ENCODE measurements at regions of chr5 and their contacts with region 1.

Region 1: DNA sequence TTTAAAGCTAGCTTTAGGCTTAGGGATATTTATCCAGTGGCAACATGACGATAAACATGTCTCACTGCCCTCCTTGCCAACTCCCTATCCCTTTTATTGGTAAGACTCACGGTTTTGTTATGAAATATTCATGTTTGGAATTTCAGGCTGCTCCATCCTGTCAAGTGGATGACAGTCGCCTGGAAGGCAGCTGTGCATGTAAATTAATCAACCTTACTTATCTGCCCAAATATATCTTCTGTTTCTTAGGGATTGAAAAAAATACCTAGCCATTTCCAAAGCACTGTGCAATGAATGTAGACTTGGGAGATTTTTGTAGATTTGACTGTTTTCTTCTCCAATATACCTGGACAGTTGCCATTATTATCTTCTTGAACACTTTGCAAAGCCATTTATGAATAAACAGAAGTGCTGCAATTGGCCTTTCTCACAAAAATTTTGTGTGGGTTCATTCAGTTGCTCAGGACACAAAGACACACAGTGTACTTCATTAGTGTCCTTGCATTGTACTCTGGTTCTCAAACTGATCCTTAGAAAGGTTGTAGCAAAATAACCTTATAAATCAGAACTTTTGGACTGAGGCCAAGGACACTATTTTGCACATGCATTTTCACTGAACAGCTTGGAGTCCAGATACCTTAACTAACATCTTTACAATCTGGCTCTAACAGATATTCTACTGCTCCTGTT is 889.4 kb upstream of the SEMA6A start:
- DNase-seq: peak; percentile 1
- H3K4me3 ChIP-seq: no peak overlapping the region
- H3K27ac ChIP-seq: no peak overlapping the region
- H3K4me1 ChIP-seq: no peaks in the 10 kb centered on the region
- H3K27me3 ChIP-seq: no peaks in the 10 kb centered on the region
- CTCF ChIP-seq: no peak

Region 2: DNA sequence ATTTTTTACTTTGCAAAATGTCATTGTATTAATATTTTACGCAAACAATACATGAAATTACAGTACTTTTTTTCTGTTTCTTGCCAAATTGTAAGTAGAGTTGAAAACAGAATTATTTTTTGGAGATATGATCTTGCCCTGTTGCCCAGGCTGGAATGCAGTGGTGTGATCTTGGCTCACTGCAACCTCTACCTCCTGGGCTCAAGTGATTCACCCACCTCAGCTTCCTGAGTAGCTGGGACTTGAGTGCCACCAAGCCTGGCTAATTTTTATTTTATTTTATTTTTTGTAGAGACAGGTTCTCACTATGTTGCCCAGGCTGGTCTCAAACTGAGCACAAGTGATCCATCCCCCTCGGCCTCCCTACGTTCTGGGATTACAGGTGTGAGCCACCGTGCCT is 1266.7 kb before region 1 on chr5:
- CTCF ChIA-PET with region 1: interaction called, 23 read pairs
- dilution Hi-C with region 1: no loop called
- in situ Hi-C with region 1: no loop called
- intact Hi-C with region 1: no loop called
- DNase-seq: peak; percentile 2
- H3K4me3 ChIP-seq: no peak overlapping the region
- H3K27ac ChIP-seq: no peak overlapping the region
- H3K4me1 ChIP-seq: peaks cover 2% of the 10 kb centered on the region
- H3K27me3 ChIP-seq: no peaks in the 10 kb centered on the region
- CTCF ChIP-seq: no peak

Region 3: DNA sequence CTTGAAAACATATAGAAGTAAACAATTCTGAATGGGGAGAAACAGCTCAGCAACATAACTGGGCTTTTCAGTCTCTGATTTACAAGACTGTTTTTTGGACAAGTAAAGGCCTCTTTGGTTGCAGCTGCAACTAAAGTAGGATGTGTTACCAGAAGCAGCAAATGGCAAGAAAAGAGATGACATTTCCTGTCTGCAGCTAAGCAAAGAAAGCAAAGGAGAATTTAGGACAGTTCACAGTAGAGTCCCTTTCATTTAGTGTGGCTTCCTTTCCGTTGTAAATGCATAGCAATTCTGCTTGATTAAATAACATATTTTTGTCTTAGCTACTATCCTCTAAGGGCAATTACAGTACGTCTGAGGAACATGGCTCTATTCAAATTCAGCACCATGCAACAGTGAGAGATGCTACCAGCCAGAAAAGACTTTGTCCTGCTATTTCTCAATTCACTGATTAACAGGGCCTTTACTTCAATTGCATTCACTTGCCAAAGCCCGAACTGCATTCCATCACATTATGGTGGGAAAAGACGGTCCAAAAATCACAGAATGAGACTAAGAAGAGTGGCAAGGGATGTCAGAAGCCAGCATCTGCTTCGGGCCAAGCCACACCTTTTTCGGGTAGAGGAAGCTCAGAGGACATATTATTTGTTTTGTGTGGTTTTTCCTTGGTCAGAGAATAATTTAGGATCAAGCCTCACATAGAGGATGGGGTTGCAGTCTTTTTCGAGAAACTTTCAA is 997.1 kb before region 1 on chr5:
- CTCF ChIA-PET with region 1: no interaction called
- dilution Hi-C with region 1: no loop called
- in situ Hi-C with region 1: no loop called
- intact Hi-C with region 1: no loop called
- DNase-seq: no peak
- H3K4me3 ChIP-seq: no peak overlapping the region
- H3K27ac ChIP-seq: no peak overlapping the region
- H3K4me1 ChIP-seq: no peaks in the 10 kb centered on the region
- H3K27me3 ChIP-seq: no peaks in the 10 kb centered on the region
- CTCF ChIP-seq: no peak

Measured in mammary epithelial cell (primary cell).